H1 (cell line): ENCODE measurements at regions of chr16 and their contacts with region 1.

Region 1: GRCh38 chr16:2752035-2752849 is at the start of gene SRRM2:
- DNase-seq: peak; percentile 78 to 96
- H3K4me3 ChIP-seq: peak within 1 kb of the TSS; percentile 75 to 93 (median 88)
- H3K27ac ChIP-seq: peak within 1 kb of the TSS; percentile 99
- H3K4me1 ChIP-seq: peaks cover 2 to 8% (median 5%) of the 10 kb centered on the region in 4 experiments; a peak in 6 of 7 replicates
- H3K27me3 ChIP-seq: no peaks in the 10 kb centered on the region
- CTCF ChIP-seq: no peak
- EP300 ChIP-seq: no peak
- POLR2A ChIP-seq: peak; percentile 85 to 95
- RAD21 ChIP-seq: no peak
- total RNA-seq, gene SRRM2: 563 and 579 TPM in 2 replicates

Region 2: DNA sequence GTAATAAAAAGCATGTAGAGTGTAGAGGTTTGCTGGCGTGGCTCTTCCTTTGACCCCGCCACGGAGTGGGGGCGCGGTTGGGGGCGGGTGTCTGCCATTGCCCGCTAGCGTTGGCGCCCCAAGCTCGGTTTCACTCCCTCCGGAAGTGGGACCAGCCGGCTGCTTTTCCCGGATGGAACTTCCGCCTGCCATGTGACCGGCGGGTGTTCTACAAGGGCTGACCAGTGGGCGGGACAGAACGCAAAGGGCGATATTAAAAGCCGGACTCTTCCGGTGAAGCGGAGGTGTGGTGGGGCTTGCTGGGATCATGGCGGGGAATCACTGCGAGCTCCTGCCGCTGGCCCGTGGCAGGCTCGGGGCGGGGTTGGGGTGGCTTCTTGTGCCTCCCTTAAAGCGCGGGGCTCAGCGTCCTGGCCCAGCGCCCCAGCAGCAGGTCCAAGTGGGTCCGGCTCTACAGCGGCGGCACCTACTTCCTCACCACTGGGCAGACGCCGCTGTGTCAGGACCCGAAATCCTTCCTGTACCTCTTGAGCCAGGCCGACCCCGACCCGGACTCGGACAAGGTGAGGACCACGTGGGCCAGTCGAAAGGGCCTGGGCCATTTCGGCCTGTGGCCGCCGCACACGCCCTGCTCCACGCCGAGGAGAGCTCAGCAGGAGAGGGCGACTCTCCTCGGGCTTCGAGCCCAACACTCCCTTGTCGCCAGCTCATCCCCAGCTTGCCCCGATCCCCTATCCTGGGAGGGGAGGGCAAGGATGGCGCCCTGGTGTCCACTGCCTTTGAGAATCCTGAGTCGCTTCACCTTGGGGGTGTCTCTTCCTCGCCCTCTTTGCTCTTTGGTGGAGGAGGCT is 148.9 kb before region 1 on chr16:
- CTCF ChIA-PET with region 1: no interaction called
- POLR2A ChIA-PET with region 1: interaction called, 11 read pairs
- DNase-seq: peak; percentile 86 to 95
- H3K4me3 ChIP-seq: peak overlapping the region; percentile 80 to 95 (median 88)
- H3K27ac ChIP-seq: peak overlapping the region; percentile 84
- H3K4me1 ChIP-seq: peaks cover 0 to 2% (median 0%) of the 10 kb centered on the region in 4 experiments; a peak in 1 of 7 replicates
- H3K27me3 ChIP-seq: no peaks in the 10 kb centered on the region
- CTCF ChIP-seq: 0 out of 4 replicates have a peak, but pooled peaks of 1 of the 3 experiments have one; percentile 14
- EP300 ChIP-seq: peak in 1 of 2 experiments; percentile 62; a peak in 1 of 3 replicates
- POLR2A ChIP-seq: peak; percentile 96 to 97
- RAD21 ChIP-seq: no peak

Region 3: GRCh38 chr16:2697401-2697948 is 54.8 kb before region 1 on chr16:
- CTCF ChIA-PET with region 1: no interaction called
- POLR2A ChIA-PET with region 1: no interaction called
- DNase-seq: no peak
- H3K4me3 ChIP-seq: no peak overlapping the region
- H3K27ac ChIP-seq: no peak overlapping the region
- H3K4me1 ChIP-seq: peaks cover 0 to 6% (median 5%) of the 10 kb centered on the region in 4 experiments; a peak in 4 of 7 replicates
- H3K27me3 ChIP-seq: no peaks in the 10 kb centered on the region
- CTCF ChIP-seq: no peak
- EP300 ChIP-seq: no peak
- POLR2A ChIP-seq: no peak
- RAD21 ChIP-seq: no peak

Region 4: DNA sequence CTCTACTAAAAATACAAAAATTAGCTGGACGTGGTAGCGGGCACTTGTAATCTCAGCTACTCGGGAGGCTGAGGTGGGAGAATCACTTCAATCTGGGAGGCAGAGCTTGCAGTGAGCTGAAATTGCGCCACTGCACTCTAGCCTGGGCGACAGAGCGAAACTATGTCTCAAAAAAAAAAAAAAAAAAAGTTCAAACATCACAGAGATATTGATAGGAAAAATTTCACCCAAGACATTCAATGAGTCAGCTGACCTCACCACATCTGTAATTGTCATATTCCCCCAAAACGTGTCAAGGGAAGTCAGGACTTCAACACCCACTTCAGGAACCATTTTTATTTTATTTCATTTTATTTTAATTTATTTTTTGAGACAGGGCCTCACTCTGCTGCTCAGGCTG is 24.2 kb before region 1 on chr16:
- CTCF ChIA-PET with region 1: no interaction called
- POLR2A ChIA-PET with region 1: interaction called, 20 read pairs
- DNase-seq: no peak
- H3K4me3 ChIP-seq: no peak overlapping the region
- H3K27ac ChIP-seq: no peak overlapping the region
- H3K4me1 ChIP-seq: no peaks in the 10 kb centered on the region
- H3K27me3 ChIP-seq: no peaks in the 10 kb centered on the region; a peak in 1 of 7 replicates
- CTCF ChIP-seq: no peak
- EP300 ChIP-seq: no peak
- POLR2A ChIP-seq: no peak
- RAD21 ChIP-seq: no peak

Region 5: DNA sequence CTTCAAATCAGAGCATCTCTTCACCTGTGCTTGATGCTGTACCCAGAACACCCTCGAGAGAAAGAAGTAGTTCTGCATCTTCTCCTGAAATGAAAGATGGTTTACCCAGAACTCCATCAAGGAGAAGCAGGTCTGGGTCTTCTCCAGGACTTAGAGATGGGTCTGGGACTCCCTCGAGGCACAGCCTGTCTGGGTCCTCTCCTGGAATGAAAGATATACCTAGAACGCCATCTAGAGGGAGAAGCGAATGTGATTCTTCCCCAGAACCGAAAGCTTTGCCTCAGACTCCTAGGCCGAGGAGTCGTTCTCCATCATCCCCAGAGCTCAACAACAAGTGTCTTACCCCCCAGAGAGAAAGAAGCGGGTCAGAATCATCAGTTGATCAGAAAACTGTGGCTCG is 12.5 kb after region 1 on chr16:
- CTCF ChIA-PET with region 1: interaction called, 3 read pairs
- POLR2A ChIA-PET with region 1: interaction called, 140 read pairs
- DNase-seq: no peak
- H3K4me3 ChIP-seq: no peak overlapping the region
- H3K27ac ChIP-seq: no peak overlapping the region
- H3K4me1 ChIP-seq: no peaks in the 10 kb centered on the region; a peak in 1 of 7 replicates
- H3K27me3 ChIP-seq: no peaks in the 10 kb centered on the region
- CTCF ChIP-seq: no peak
- EP300 ChIP-seq: no peak
- POLR2A ChIP-seq: no peak; a peak in 1 of 3 replicates
- RAD21 ChIP-seq: no peak

Region 6: GRCh38 chr16:2777231-2777902 is 25.1 kb after region 1 on chr16 and contains the start of gene ELOB:
- CTCF ChIA-PET with region 1: interaction called, 5 read pairs
- POLR2A ChIA-PET with region 1: interaction called, 180 read pairs
- DNase-seq: peak in 1 of 2 experiments; percentile 91
- H3K4me3 ChIP-seq: peak within 1 kb of the TSS; percentile 94 to 99 (median 96)
- H3K27ac ChIP-seq: peak within 1 kb of the TSS; percentile 100
- H3K4me1 ChIP-seq: peaks cover 0 to 4% (median under 1%) of the 10 kb centered on the region in 4 experiments; a peak in 5 of 7 replicates
- H3K27me3 ChIP-seq: no peaks in the 10 kb centered on the region; a peak in 1 of 7 replicates
- CTCF ChIP-seq: no peak
- EP300 ChIP-seq: peak in 1 of 2 experiments; percentile 31; a peak in 1 of 3 replicates
- POLR2A ChIP-seq: peak; percentile 72 to 86; a peak in 2 of 3 replicates
- RAD21 ChIP-seq: no peak
- total RNA-seq, gene ELOB: 237 and 248 TPM in 2 replicates

Region 7: DNA sequence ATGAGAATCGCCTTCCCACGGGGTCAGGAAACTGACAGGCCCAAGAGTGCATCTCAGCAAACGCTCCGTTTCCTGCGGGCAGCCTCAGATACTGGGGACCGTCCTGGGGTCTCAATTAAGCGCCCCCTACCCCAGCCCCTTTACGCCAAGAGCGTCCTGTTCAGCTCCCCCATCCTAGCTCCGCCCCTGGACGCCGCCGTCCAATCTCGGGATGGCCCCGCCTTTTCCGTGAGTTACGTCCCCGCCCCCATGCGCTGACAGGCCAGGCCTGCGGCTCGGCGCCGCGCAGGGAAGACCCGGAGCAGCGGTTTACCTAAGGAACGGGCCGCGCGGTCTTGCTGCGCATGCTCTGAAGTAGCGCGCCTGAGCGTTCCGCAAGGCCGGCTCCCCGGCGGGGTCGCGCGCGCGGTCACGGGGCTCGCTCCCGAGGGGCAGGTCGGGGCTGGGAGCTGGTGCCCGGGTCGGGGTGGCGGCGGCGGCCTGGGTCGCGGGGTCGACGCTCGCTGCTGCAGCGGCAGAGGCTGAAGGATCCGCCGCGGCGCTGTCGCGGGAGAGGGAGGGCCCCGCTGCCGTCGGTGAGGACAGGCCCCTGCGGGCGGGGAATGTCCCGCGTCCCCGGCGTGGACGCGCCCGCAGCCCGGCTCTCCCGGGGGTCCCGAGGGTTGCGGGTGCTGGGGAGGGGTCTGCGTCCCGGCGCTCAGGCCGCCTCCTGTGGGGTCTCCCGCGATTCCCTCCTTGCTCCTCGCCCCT is 159.5 kb after region 1 on chr16 and contains the start of gene FLYWCH1:
- CTCF ChIA-PET with region 1: no interaction called
- POLR2A ChIA-PET with region 1: interaction called, 11 read pairs
- DNase-seq: peak; percentile 96 to 99
- H3K4me3 ChIP-seq: peak within 1 kb of the TSS; percentile 61 to 87 (median 73)
- H3K27ac ChIP-seq: no peak within 1 kb of the TSS
- H3K4me1 ChIP-seq: peaks cover 0 to 6% (median 2%) of the 10 kb centered on the region in 4 experiments; a peak in 3 of 7 replicates
- H3K27me3 ChIP-seq: peaks cover 0 to 9% (median 8%) of the 10 kb centered on the region in 4 experiments; a peak in 5 of 7 replicates
- CTCF ChIP-seq: no peak
- EP300 ChIP-seq: 0 out of 3 replicates have a peak, but pooled peaks of 1 of the 2 experiments have one; percentile 15
- POLR2A ChIP-seq: 0 out of 3 replicates have a peak, but pooled peaks of 1 of the 2 experiments have one; percentile 28
- RAD21 ChIP-seq: no peak
- total RNA-seq, gene FLYWCH1: 23.1 and 23.5 TPM in 2 replicates